Activated CD4-positive, alpha-beta memory T cell treated with anti-CD3 and anti-CD28 coated beads for 36 hours (primary cell): ENCODE measurements at regions of chr14 and their contacts with region 1.

Region 1: GRCh38 chr14:91681893-91682563 is 49.9 kb downstream of the CATSPERB start:
- DNase-seq: peak; percentile 44
- H3K4me3 Mint-ChIP-seq: no peak overlapping the region
- H3K27ac Mint-ChIP-seq: no peak overlapping the region
- H3K4me1 Mint-ChIP-seq: peaks cover 17% of the 10 kb centered on the region
- H3K27me3 Mint-ChIP-seq: no peaks in the 10 kb centered on the region

Region 2: DNA sequence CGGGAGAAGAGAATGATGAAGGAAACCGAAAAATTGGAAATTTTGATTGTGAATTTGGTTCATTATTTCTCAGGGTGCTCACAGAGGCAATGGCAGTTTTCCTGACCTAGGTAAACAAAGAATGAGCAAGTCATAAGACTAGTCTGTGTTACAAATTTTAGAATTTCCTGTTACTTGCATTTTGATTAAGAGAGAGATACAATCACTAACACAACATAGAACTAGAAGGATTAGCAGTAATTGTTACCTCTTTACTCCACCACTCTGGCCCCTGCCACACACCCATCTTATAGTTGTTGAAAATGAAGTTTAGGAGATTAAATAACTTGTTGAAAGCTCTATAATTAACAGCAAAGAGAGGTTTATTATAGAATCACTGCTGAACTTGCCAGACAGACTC is 12.2 kb before region 1 on chr14:
- CTCF ChIA-PET with region 1: no interaction called
- POLR2A ChIA-PET with region 1: no interaction called
- intact Hi-C with region 1: no loop called
- DNase-seq: no peak
- H3K4me3 Mint-ChIP-seq: no peak overlapping the region
- H3K27ac Mint-ChIP-seq: no peak overlapping the region
- H3K4me1 Mint-ChIP-seq: no peaks in the 10 kb centered on the region
- H3K27me3 Mint-ChIP-seq: no peaks in the 10 kb centered on the region

Region 3: GRCh38 chr14:91729766-91730165 is 47.7 kb after region 1 on chr14:
- CTCF ChIA-PET with region 1: no interaction called
- POLR2A ChIA-PET with region 1: no interaction called
- intact Hi-C with region 1: loop called (anchors 2 kb)
- DNase-seq: no peak
- H3K4me3 Mint-ChIP-seq: no peak overlapping the region
- H3K27ac Mint-ChIP-seq: no peak overlapping the region
- H3K4me1 Mint-ChIP-seq: peaks cover 6% of the 10 kb centered on the region
- H3K27me3 Mint-ChIP-seq: no peaks in the 10 kb centered on the region